Activated naive CD4-positive, alpha-beta T cell treated with anti-CD3 and anti-CD28 coated beads for 36 hours (primary cell): ENCODE measurements at regions of chr12 and their contacts with region 1.

Region 1: DNA sequence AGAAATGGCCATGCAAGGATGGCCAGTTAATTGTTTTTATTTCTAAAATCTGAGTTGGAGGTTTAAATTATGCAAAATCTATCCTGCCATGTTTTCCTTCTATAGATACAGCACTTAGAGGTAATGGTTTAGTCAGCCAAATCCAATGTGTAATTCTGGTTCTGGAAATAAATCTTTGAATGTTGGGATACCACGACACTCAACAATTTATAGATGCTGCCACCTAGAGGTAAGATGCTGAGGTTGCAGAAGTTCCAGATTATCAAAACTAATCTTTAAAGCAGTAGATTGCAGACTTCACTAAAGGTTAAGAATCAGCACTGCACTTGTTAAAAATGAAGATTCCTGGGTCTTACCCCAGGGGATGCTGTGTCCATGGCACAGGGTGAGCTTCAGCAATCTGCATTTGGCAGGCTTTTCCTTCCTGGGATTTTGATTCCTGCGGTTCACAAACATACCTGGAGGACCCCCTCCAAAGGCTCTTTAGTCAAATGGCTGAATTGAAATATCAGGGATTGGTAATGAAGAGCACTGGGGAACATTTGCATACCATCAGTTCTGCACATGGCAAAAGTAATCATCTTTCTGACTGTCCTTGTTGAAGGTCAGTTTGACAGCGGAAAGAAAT is 53.4 kb upstream of the ANO4 start:
- DNase-seq: peak; percentile 8
- H3K4me3 Mint-ChIP-seq: no peak overlapping the region
- H3K27ac Mint-ChIP-seq: no peak overlapping the region
- H3K4me1 Mint-ChIP-seq: no peaks in the 10 kb centered on the region
- H3K27me3 Mint-ChIP-seq: peaks cover 6% of the 10 kb centered on the region

Region 2: GRCh38 chr12:99810718-99811593 is 930.2 kb before region 1 on chr12:
- CTCF ChIA-PET with region 1: no interaction called
- intact Hi-C with region 1: loop called (anchors 10 kb)
- DNase-seq: no peak
- H3K4me3 Mint-ChIP-seq: no peak overlapping the region
- H3K27ac Mint-ChIP-seq: no peak overlapping the region
- H3K4me1 Mint-ChIP-seq: no peaks in the 10 kb centered on the region
- H3K27me3 Mint-ChIP-seq: no peaks in the 10 kb centered on the region

Region 3: DNA sequence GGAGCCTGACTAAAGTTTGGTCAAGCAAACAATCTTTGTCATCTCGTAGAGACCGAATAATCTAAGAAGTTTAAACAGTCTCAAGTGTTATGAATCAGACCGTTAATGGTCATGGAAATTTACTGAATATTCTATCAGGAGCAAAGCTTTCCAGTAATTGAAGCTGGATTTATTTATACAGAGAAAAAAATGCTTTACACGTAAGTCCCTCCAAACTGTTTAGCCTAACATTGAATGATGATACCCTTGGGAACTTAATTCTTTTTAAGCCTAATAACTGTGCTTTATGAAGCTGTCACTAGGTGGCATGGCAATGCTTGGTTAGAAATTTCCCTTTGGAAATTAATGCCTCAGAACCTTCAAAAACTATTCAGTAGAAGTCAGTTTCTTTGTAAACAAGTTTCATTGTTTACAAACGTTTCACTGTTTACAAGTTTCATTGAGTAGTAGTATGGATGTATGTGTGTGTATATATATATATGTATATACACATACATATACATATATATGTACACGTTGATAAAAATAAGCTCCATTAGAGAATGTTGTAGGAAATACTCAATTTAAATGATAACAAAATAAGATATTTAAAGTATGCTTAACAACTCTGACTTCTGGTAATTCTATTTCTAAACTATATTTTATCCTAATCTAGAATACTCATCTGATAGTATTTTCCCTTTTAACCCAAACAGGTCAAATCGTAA is 506.4 kb before region 1 on chr12:
- CTCF ChIA-PET with region 1: interaction called, 6 read pairs
- intact Hi-C with region 1: loop called (anchors 1 kb)
- DNase-seq: peak; percentile 9
- H3K4me3 Mint-ChIP-seq: no peak overlapping the region
- H3K27ac Mint-ChIP-seq: no peak overlapping the region
- H3K4me1 Mint-ChIP-seq: no peaks in the 10 kb centered on the region
- H3K27me3 Mint-ChIP-seq: no peaks in the 10 kb centered on the region

Region 4: DNA sequence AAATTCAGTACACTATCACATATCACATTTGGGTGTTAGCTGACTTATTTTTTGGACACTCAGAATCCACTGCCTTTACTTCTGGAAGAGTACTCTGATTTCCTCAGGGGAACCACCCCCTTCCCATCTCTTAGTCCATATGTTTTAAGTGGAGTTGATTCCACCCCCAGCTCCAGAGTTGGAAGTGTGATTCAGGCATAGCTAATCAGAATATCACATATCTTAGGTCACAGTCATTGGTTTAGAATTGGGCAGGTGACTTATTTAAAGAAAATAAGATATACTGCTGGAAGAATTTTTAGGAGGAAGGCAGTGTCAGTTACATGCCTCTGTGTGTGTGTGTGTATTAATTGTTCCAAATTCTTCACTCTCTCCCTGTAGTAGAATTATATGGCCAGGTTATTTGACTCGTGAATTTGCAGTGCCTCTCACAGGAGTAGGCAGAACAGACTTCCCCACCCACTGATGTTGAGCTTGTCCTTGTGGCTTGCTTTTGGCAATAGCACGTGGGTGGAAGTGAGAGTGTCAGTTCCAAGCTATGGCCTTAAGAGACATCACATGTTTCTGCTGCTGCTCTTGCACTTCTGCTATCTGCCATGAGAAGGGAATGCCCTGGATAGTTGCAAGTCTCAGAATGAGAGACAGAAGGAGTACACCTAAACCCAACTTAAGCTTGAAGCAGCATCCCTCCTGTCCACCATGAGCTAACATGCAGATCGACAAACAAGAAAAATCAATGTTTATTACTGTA is 174.1 kb before region 1 on chr12:
- CTCF ChIA-PET with region 1: no interaction called
- intact Hi-C with region 1: loop called (anchors 10 kb)
- DNase-seq: no peak
- H3K4me3 Mint-ChIP-seq: no peak overlapping the region
- H3K27ac Mint-ChIP-seq: no peak overlapping the region
- H3K4me1 Mint-ChIP-seq: no peaks in the 10 kb centered on the region
- H3K27me3 Mint-ChIP-seq: peaks cover 21% of the 10 kb centered on the region